ENCODE measurements at regions of chr1 and their contacts with region 1.

Region 1: DNA sequence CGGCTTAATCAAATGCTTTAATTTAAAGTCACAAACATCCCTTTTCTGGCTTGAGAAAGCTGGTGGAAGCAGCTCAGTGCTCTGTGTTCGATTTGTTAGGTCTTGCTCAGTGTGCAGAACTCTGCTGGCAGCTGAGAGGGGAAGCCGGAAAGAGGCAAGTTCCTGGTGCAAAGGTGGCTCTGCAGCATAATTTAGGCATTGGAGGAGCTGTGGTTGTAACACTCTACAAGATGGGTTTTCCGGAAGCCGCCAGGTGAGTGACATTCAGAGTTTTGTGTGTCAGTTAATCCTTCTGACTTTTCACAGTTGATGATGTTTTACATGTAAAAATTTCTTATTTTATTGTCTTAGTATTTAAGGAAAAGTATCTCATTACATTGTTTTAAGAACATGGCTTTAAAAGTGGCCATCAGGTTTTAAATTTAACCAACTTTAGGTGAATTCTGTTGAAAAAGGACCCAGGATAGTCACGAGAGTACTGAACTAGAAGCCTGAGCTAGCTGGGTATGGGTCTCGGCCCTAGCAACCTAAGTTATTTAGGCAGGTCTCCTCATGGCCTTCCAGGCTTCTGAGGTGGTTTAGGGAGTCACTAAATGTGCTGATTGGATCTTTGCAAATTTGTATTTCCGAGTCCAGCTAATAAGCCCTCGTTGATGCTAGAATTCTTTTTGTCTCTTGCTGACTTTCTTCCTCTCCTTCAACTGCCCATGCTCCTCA is 47.1 kb upstream of the PODN start:
- DNase-seq: peak; percentile 75
- ATAC-seq: peak; percentile 94

Region 2: GRCh38 chr1:52955129-52955970 is 59.6 kb before region 1 on chr1:
- intact Hi-C with region 1: no loop called
- DNase-seq: no peak
- ATAC-seq: no peak

Region 3: DNA sequence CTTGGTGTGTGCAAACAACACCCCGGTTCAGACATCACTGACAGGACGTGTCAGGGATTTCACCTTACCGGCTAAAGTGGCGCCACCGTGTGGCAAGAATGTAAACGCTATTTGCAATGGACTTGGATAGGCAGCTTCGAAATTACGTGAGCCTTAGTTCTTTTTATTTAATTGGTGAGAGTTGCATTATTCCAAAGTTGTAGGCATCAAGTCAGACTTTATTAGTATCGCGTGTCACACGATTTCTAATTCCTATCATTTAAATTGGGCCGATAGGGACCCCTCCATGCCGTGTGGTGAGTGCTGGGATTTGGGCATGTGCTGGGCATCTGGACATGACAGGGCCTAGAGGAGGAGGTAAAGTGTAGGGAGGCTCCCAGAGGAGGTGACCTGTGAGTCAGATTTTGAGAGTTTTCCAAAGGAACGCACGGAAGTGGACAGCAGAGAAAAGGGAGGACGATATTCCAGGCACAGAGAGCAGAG is 167.2 kb after region 1 on chr1:
- intact Hi-C with region 1: loop called (anchors 10 kb)
- DNase-seq: peak; percentile 86
- ATAC-seq: peak; percentile 47

Measured in Right ventricle myocardium inferior (tissue), 1 donor.